ENCODE measurements at regions of chr3 and their contacts with region 1.

Region 1: GRCh38 chr3:101849051-101849720 is at the start of gene NFKBIZ:
- DNase-seq: peak; percentile 77
- ATAC-seq: peak; percentile 92
- H3K4me3 ChIP-seq: peak within 1 kb of the TSS; percentile 61 to 87
- H3K27ac ChIP-seq: peak within 1 kb of the TSS; percentile 87
- H3K4me1 ChIP-seq: peaks cover 9 to 23% of the 10 kb centered on the region in 2 experiments
- H3K27me3 ChIP-seq: no peaks in the 10 kb centered on the region
- CTCF ChIP-seq: no peak
- POLR2A ChIP-seq: peak; percentile 96
- RAD21 ChIP-seq: no peak
- total RNA-seq, gene NFKBIZ: 12.2 TPM

Region 2: DNA sequence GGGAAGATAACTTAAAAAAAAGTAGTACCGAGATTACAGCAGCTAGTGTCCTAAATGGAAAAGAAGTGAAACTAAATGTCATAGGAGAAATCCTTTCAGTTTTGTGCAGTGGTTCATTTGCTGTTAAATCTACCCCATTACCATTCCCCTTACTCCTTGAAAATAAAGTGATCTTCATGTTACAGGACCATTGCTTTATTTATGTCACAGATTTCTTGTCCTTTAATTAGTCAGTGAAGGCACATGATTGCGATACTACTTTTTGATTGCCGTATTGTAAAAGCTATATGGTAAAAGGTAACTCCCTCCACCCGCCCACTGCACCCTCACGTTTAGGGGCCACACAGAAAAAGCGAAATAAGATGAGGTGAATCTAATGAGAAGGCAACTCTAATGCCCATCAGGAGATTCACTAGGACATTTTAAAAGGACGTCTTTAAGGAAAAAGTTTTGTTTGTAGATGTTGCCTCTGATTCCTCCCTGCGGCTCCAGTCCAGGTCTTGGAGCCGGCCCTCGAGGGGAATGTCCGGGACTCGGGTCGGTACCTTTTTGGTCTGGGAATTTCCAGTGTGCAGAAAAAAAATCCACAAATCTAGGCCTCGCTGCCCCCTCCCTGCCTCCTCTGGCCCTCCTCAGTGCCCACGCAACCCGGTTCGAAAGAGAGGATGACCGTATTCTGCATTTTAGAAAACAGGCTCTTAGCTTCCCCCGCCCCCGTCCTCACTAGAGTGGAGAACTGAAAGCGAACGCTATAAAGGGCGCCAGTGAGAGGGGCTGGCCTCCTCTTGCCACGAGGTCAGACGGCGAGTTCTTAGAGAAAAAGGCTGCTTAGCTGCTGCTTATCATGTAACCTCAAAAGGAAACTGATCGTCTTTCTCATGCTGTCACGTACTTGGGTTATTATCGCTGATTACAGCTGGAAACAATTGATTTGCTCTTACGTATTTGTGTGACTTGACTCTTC is 21.7 kb before region 1 on chr3:
- CTCF ChIA-PET with region 1: no interaction called
- POLR2A ChIA-PET with region 1: interaction called, 18 read pairs
- RAD21 ChIA-PET with region 1: no interaction called
- intact Hi-C with region 1: loop called (anchors 2 kb)
- DNase-seq: peak; percentile 52
- ATAC-seq: peak; percentile 82
- H3K4me3 ChIP-seq: peak overlapping the region; percentile 56 to 67
- H3K27ac ChIP-seq: peak overlapping the region; percentile 74
- H3K4me1 ChIP-seq: peaks cover 12 to 19% of the 10 kb centered on the region in 2 experiments
- H3K27me3 ChIP-seq: no peaks in the 10 kb centered on the region
- CTCF ChIP-seq: no peak
- POLR2A ChIP-seq: no peak
- RAD21 ChIP-seq: no peak

Region 3: DNA sequence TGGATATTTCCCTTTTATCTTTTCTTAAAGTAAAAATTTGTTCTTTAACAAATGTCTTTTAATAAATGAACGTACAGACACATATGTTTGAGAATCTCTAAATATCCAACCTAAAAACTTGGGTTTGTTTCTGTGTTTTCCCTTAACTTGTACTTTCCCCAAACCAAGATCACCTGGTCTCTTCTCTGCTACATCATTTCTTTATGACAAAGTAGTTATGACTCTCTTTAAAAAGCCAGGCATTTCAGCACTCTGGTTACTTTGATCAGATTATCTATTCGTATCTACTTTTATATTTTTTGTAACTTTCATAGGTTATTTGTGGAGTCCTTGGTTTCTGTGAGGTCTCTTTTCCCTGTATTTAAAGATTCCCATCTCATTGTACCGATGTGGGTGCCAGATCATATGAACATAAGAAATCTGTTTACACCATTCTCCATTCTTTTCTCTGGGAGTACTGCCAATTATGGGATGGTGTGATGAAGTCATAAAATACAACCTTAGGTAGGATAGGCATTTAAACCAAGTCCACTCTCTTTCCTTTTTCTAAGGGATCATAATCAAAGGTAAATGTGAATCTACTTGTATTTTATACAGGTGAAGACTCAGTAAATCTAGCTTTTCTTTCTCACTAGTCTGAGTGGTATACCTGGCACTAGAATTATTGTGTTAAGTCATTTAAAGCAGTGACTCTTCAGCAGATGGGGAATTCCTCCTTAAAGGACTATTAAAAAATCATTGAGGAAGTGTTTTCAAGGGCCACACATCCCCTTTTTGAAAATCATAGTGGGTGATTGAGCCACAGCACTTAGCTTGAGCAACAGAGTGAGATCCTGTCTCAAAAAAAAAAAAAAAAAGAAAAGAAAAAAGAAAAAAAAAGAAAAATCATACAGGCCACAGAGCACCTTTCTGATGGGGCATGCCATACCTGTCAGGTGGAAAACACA is 12.3 kb before region 1 on chr3:
- CTCF ChIA-PET with region 1: no interaction called
- POLR2A ChIA-PET with region 1: interaction called, 13 read pairs
- RAD21 ChIA-PET with region 1: no interaction called
- intact Hi-C with region 1: no loop called
- DNase-seq: no peak
- ATAC-seq: no peak
- H3K4me3 ChIP-seq: no peak overlapping the region
- H3K27ac ChIP-seq: no peak overlapping the region
- H3K4me1 ChIP-seq: peaks cover 0 to 1% of the 10 kb centered on the region in 2 experiments; a peak in 2 of 4 replicates
- H3K27me3 ChIP-seq: no peaks in the 10 kb centered on the region
- CTCF ChIP-seq: no peak
- POLR2A ChIP-seq: no peak
- RAD21 ChIP-seq: no peak

Region 4: GRCh38 chr3:101950510-101950909 is 101.3 kb after region 1 on chr3:
- CTCF ChIA-PET with region 1: no interaction called
- POLR2A ChIA-PET with region 1: no interaction called
- RAD21 ChIA-PET with region 1: no interaction called
- intact Hi-C with region 1: no loop called
- DNase-seq: no peak
- ATAC-seq: no peak
- H3K4me3 ChIP-seq: no peak overlapping the region
- H3K27ac ChIP-seq: no peak overlapping the region
- H3K4me1 ChIP-seq: no peaks in the 10 kb centered on the region
- H3K27me3 ChIP-seq: no peaks in the 10 kb centered on the region
- CTCF ChIP-seq: no peak
- POLR2A ChIP-seq: no peak
- RAD21 ChIP-seq: no peak

Region 5: DNA sequence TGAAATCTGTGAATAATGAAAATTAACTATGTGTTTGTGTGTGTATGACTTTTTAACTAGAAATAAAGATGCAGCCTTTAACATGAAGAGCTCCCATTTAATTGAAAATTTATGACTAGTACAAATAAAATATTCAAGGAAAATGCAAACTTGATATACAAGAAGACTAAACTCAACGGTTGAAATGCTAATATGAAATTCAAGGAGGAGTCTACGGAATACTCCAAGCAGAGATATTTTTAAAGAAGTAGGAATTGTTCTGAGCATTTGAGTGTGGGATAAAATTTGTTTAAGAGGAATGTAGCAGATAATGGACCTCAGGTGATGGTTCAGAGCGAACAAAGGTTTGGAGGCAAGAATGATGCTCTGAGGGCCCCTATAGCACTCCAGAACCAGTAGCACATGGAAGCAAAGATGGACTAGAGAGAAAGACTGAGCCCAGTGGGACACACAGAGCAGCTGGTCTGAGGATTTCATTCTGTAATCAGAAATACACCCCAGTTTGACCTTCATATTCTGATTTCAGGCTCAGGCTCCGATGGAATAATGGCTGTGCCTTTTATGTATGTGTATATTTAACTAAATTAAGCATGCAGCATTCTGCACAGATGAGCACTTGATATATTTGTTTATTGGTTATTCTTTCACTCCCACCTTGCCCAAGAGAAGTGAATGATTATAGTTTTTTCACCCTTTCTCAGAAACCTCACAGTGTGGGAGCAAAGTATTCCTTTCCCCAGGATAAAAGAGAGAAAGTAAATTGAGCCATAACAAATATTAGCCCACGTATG is 812.7 kb after region 1 on chr3:
- CTCF ChIA-PET with region 1: no interaction called
- POLR2A ChIA-PET with region 1: no interaction called
- RAD21 ChIA-PET with region 1: no interaction called
- intact Hi-C with region 1: no loop called
- DNase-seq: no peak
- ATAC-seq: no peak
- H3K4me3 ChIP-seq: no peak overlapping the region
- H3K27ac ChIP-seq: no peak overlapping the region
- H3K4me1 ChIP-seq: no peaks in the 10 kb centered on the region
- H3K27me3 ChIP-seq: no peaks in the 10 kb centered on the region
- CTCF ChIP-seq: no peak
- POLR2A ChIP-seq: no peak
- RAD21 ChIP-seq: no peak

Measured in HCT116 (cell line).